ENCODE measurements at regions of chr10 and their contacts with region 1.

Region 1: DNA sequence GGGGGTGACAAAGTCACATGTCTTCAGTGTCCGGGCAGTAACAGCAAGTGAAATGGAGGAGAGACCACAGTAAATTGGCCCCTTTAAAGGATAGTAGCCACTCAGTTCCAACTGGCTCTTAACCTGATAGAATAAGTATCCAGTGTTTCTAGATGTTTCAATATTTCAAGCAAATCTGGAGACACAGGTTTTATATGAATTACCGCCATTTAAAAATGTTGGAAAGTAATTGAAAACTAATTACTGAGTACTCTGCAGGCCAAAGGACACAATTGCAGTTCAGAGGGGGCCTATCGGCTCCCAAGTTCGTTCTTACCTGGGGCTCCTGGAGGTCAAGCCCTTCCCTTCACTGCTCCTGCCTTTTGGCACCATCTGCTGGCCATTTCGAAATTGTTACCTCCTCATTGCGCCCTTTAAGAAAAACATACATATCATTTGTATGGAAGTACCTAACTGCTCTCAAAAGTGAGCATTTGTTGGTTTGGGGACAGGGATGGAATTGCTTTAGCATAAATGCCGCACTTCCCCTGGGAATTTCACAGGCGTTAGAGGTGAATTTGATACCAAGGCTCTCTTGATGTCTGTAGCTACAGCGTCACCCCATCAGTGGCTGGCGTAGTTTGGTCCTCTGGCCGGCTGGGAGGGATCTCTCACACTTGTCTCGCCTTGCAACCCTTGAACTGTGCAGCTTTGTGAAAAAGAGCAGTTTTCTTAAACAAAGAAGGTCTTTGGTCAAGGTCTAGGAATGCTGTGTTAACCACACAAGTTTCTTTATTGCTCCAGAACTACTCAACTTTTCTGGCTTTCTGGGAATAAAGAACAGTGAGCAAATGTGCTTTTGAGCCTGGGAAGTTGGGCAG is 220.0 kb downstream of the ARHGAP21 start:
- DNase-seq: peak; percentile 28
- ATAC-seq: peak; percentile 78
- H3K4me3 ChIP-seq: no peak overlapping the region
- H3K27ac ChIP-seq: no peak overlapping the region
- H3K4me1 ChIP-seq: no peaks in the 10 kb centered on the region; the same call in 1 of the 2 replicates
- H3K27me3 ChIP-seq: no peaks in the 10 kb centered on the region
- CTCF ChIP-seq: peak; percentile 81

Region 2: DNA sequence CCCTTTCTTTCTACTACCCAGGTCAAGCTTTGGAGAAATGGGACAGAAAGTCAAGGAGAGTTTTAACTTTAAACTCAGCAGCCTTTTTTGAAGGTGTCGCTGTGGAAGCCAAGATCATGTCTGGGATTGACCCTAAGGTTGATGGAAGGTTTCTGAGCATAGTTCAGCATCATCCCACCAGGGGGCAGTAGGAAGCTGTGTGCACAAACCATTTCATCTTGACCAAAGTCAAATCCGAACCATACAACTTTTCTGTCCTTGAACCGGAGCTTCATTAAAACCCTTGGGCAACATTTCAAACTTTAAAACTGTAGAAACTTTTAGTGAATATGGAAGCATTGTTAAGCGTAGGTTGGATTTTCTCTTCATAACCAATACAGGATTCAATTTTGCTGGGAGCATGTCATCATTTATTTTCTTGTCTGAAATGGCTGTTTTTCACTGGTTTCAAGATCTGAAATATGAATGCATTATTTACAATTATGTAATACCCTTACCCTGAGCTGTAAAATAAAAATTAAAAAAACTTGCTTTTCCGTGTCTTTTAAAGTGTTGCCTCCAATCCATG is 509.1 kb before region 1 on chr10:
- CTCF ChIA-PET with region 1: no interaction called
- POLR2A ChIA-PET with region 1: no interaction called
- in situ Hi-C with region 1: no loop called
- intact Hi-C with region 1: loop called (anchors 10 kb)
- DNase-seq: peak; percentile 38
- ATAC-seq: no peak
- H3K4me3 ChIP-seq: no peak overlapping the region
- H3K27ac ChIP-seq: no peak overlapping the region
- H3K4me1 ChIP-seq: no peaks in the 10 kb centered on the region
- H3K27me3 ChIP-seq: no peaks in the 10 kb centered on the region
- CTCF ChIP-seq: peak; percentile 77

Region 3: DNA sequence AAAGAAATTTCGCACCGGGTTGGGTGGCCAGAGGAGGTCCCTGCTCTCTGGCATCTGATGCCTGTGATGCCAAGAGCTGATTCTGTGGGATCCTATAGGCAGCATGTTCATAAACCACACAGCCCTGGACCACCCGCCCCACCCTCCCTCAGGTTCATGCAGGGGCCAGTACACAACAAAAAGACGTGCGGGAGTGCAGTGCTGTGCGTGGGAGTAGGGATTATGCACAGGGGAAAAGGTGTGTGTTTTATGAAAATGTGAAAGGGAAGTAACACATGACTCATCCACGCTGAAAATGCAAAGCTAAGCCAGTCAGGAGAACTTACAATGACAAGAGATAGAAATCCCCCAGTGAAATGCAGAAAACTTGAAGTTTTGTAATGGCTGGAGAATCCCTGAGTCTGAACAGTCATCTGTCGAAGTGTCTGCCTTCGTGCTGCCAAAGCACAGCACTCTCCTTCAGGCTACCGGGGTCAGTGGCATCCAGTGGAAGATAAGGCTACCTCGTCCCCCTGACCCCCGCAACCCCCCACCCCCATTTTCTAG is 293.7 kb before region 1 on chr10:
- CTCF ChIA-PET with region 1: no interaction called
- POLR2A ChIA-PET with region 1: no interaction called
- in situ Hi-C with region 1: no loop called
- intact Hi-C with region 1: loop called (anchors 10 kb)
- DNase-seq: no peak
- ATAC-seq: peak; percentile 61
- H3K4me3 ChIP-seq: peak overlapping the region; percentile 47 to 54
- H3K27ac ChIP-seq: peak overlapping the region; percentile 61; the same call in 1 of the 2 replicates
- H3K4me1 ChIP-seq: peaks cover 13% of the 10 kb centered on the region
- H3K27me3 ChIP-seq: no peaks in the 10 kb centered on the region
- CTCF ChIP-seq: no peak